ENCODE measurements at regions of chr21 and their contacts with region 1.

Region 1: DNA sequence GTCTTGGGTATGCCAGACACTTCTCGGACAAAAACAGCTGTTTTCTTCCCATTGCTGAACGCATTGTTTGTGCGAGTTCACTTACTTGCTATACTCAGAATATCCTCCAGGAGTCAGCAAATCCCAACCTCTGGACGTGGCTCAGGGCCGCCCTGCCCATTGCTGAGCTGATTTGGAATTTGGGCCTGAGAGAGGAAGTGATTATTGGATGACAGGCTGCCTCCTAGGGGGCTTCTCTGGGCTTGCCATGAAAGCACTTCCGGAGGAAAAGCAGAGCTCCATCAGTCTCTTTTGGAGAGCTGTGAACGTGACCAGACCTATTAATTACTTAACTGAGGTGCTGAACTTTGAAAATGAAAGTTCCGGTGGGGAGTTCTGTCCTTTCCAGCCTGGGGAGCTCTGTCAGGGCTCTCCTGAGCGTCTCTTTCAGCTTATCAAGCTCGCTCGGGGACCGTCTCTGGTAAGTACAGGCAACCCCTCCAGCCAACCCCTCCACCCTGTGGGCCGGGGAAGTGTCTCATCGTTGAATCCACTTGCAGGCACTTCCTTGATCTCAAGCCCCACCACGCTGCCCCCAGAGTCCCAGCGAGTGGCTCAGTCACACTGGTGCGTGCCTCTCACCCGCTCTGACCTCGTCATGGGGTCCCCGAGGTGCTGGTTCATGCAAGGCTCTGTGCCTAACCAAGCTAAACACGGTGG is 76.9 kb downstream of the CLIC6 start:
- DNase-seq: peak; percentile 74
- ATAC-seq: peak; percentile 99
- H3K4me3 Mint-ChIP-seq: no peak overlapping the region
- H3K27ac Mint-ChIP-seq: no peak overlapping the region
- H3K4me1 Mint-ChIP-seq: peaks cover 3% of the 10 kb centered on the region; the same call in 1 of the 2 replicates
- H3K27me3 Mint-ChIP-seq: no peaks in the 10 kb centered on the region
- CTCF ChIP-seq: peak; percentile 77

Region 2: GRCh38 chr21:34722684-34723300 is 22.9 kb before region 1 on chr21:
- CTCF ChIA-PET with region 1: interaction called, 25 read pairs
- POLR2A ChIA-PET with region 1: no interaction called
- DNase-seq: peak; percentile 76
- ATAC-seq: peak; percentile 91
- H3K4me3 Mint-ChIP-seq: no peak overlapping the region
- H3K27ac Mint-ChIP-seq: no peak overlapping the region
- H3K4me1 Mint-ChIP-seq: no peaks in the 10 kb centered on the region
- H3K27me3 Mint-ChIP-seq: peaks cover 6% of the 10 kb centered on the region; the same call in 1 of the 2 replicates
- CTCF ChIP-seq: peak; percentile 91

Region 3: GRCh38 chr21:34782506-34783365 is 37.0 kb after region 1 on chr21:
- CTCF ChIA-PET with region 1: interaction called, 10 read pairs
- POLR2A ChIA-PET with region 1: no interaction called
- DNase-seq: no peak
- ATAC-seq: no peak
- H3K4me3 Mint-ChIP-seq: no peak overlapping the region
- H3K27ac Mint-ChIP-seq: no peak overlapping the region
- H3K4me1 Mint-ChIP-seq: peaks cover 4% of the 10 kb centered on the region; the same call in 1 of the 2 replicates
- H3K27me3 Mint-ChIP-seq: peaks cover 3% of the 10 kb centered on the region; the same call in 1 of the 2 replicates
- CTCF ChIP-seq: no peak

Region 4: DNA sequence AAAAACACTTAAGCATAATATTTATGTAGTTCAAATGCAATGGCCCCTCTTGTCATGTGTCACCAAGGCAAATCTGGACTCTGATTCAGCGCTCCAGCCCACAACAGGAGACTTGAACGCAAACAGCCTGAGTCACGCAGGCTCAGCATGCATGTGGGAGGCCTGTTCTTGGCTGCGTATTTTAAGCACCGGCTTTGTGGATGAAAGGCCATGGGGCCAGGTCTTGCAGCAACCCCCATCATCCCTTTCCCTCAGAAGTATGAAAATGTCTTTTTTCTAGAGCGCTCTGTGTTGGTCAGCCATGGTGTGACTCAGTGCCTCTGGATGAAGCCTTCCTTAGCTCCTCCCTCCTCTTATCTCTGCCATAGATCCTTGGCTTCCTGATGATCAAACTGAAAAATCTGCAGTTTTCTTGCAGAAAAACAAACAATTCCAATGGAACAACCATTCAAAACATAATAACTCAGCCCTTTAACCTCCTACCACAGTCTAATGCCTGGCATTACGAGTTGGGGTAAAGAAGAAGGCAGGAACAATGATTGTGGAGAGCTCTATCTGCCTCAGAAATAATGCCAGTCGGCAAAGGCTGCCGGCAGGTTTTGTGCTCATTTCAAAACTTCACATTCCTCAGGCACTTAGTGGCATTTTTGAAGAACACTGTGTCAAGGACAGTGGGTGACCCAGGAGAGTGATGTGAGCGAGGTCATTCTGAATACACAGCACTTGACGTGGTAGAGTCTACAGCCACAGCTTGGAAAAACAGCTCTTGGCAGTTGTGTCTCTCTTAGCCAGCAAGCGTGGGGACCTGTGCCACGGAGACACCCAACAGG is 90.6 kb after region 1 on chr21:
- CTCF ChIA-PET with region 1: interaction called, 10 read pairs
- POLR2A ChIA-PET with region 1: no interaction called
- DNase-seq: no peak
- ATAC-seq: no peak
- H3K4me3 Mint-ChIP-seq: no peak overlapping the region
- H3K27ac Mint-ChIP-seq: no peak overlapping the region
- H3K4me1 Mint-ChIP-seq: peaks cover 49% of the 10 kb centered on the region
- H3K27me3 Mint-ChIP-seq: no peaks in the 10 kb centered on the region; the same call in 1 of the 2 replicates
- CTCF ChIP-seq: no peak

Region 5: GRCh38 chr21:34888569-34889319 is 143.0 kb after region 1 on chr21:
- CTCF ChIA-PET with region 1: interaction called, 80 read pairs
- POLR2A ChIA-PET with region 1: interaction called, 3 read pairs
- DNase-seq: peak; percentile 92
- ATAC-seq: peak; percentile 80
- H3K4me3 Mint-ChIP-seq: peak overlapping the region; percentile 87
- H3K27ac Mint-ChIP-seq: no peak overlapping the region
- H3K4me1 Mint-ChIP-seq: peaks cover 32% of the 10 kb centered on the region
- H3K27me3 Mint-ChIP-seq: peaks cover 83% of the 10 kb centered on the region
- CTCF ChIP-seq: no peak

Region 6: DNA sequence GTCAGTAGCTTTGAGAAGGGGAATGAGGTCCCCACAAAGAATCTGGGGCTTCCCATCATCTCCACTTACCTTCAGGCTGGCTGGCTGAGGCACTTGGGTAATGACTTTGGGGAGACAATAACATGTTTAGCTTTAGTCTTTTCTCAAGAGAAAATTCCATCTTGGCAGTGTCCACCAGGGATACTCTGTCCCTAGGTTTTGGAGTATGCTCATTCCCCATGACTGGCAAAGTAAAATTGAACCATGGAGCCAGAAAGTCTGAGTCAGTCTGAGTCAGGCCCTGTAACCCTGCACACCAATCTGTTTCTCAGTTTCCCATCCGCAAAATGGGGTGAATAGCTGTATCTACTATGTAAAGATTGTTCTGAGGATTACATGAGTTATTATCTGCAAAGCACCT is 275.2 kb after region 1 on chr21:
- CTCF ChIA-PET with region 1: interaction called, 14 read pairs
- POLR2A ChIA-PET with region 1: no interaction called
- DNase-seq: no peak
- ATAC-seq: no peak
- H3K4me3 Mint-ChIP-seq: no peak overlapping the region
- H3K27ac Mint-ChIP-seq: no peak overlapping the region
- H3K4me1 Mint-ChIP-seq: peaks cover 12% of the 10 kb centered on the region
- H3K27me3 Mint-ChIP-seq: peaks cover 6% of the 10 kb centered on the region
- CTCF ChIP-seq: no peak

Region 7: GRCh38 chr21:35508139-35508888 is 762.6 kb after region 1 on chr21:
- CTCF ChIA-PET with region 1: interaction called, 13 read pairs
- POLR2A ChIA-PET with region 1: no interaction called
- DNase-seq: peak; percentile 39
- ATAC-seq: peak; percentile 60
- H3K4me3 Mint-ChIP-seq: no peak overlapping the region
- H3K27ac Mint-ChIP-seq: 0 out of 2 replicates have a peak overlapping the region, but pooled peaks have one; percentile 35
- H3K4me1 Mint-ChIP-seq: peaks cover 76% of the 10 kb centered on the region
- H3K27me3 Mint-ChIP-seq: no peaks in the 10 kb centered on the region
- CTCF ChIP-seq: no peak

Measured in WTC11 (cell line).